Esophagus squamous epithelium (tissue), 5 donors: ENCODE measurements at regions of chrX and their contacts with region 1.

Region 1: DNA sequence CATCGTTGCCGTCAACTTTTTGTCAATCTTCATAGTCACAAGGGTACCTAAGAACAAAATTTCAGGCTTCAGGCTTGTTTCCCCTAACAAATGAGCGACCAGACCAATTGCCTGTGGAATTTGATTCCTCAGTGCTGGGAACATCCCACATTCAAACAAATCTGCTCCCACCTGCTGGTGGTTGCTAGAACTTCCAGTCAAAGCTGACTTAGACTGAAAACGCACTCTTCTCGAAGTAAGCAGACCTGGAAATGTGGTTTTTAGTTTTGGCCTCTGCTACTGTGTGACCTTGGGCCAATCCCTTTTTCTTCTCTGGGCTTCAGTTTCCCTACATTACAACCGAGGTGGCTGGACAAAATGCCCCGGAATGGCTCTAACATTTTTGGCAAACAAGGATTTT is 1.8 kb upstream of the GABRQ start:
- DNase-seq: no peak
- H3K4me3 ChIP-seq: no peak overlapping the region
- H3K27ac ChIP-seq: no peak overlapping the region
- H3K4me1 ChIP-seq: peaks cover 0 to 26% (median 0%) of the 10 kb centered on the region in 3 donors
- H3K27me3 ChIP-seq: peaks cover 0 to 42% (median 2%) of the 10 kb centered on the region in 4 donors
- CTCF ChIP-seq: peak in 5 of 6 experiments; percentile 43 to 66 (median 51)
- POLR2A ChIP-seq: no peak

Region 2: DNA sequence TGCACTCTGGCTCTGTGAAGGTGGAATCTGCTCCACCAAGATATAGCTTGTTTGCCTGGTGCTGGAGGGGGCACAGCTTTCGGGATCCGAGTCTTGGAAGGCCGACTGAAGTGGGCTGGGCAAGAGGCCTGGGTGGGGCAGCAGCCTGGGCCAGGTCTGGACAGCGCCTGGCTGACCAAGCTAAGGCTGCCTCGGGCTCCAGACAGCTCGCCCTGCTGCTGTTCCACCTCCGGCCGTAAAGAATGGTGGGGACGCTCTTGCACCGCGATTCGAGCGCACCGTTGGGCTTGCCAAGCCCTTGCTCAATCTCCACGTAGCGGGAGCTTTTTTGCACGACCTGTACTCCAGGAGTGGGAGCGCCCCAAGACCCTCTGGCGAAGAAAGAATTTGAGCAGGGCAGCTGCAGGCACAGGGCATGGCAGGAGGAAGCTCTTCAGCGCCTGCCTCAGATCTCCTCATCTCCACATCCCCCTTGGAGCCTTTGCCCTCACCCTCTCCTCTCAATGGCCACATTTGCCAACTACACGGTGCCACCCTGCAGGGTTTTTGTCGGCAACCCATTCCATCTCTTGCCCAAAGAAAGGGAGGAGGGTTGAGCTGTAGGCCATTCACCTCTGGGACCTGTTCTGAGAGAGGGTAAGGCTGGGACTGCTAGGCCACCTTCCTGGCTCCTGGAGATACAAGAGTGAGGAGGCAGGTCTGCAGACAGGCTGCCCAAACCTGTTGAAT is 882.5 kb before region 1 on chrX:
- intact Hi-C with region 1: loop called (anchors 5 kb)
- DNase-seq: no peak
- H3K4me3 ChIP-seq: no peak overlapping the region
- H3K27ac ChIP-seq: peak overlapping the region in 3 of 4 donors; percentile 3 to 57 (median 28)
- H3K4me1 ChIP-seq: peaks cover 0 to 18% (median 5%) of the 10 kb centered on the region in 3 donors
- H3K27me3 ChIP-seq: no peaks in the 10 kb centered on the region
- CTCF ChIP-seq: peak in 5 of 6 experiments; percentile 58 to 83 (median 72)
- POLR2A ChIP-seq: no peak

Region 3: DNA sequence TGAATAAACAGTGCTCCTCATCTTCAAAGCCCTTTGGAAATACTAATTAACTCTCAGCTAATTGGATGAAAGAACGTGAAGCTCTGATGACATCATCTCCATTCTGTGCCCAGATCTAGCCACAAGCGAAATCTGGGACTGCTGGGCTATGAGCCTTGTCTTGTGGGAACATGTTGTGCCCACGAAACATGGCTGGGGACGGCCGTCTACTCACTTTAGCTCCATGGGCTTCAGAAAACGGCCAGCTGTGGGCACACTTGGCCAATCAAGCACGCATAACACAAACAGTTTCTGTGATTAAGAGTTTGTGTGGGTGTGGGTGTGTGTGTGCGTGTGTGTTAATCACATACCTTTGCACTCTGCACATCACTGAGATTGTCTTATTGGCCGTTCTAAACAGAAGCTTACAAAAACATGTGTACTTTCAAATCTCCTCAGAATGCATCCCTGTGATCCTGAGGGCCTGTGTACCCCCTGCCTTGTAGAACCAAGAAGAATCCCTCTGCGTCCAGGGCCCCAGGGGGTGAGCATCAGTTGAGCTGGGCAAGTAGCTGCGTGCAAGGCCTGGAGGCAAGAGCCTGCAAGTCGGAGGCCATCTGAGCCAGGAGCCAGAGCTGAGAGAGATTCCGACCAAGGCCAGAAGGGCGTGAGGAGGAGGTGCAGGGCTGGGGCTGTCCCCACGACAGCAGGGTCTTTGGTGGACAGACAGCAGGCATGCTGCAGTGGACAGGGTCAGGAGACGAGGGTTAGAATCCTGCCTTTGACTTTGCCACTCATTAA is 243.2 kb after region 1 on chrX:
- intact Hi-C with region 1: no loop called
- DNase-seq: no peak
- H3K4me3 ChIP-seq: no peak overlapping the region
- H3K27ac ChIP-seq: peak overlapping the region; percentile 67 to 79 (median 68)
- H3K4me1 ChIP-seq: peaks cover 0 to 33% (median 7%) of the 10 kb centered on the region in 3 donors
- H3K27me3 ChIP-seq: no peaks in the 10 kb centered on the region
- CTCF ChIP-seq: no peak
- POLR2A ChIP-seq: no peak